H1 (cell line): ENCODE measurements at regions of chr9 and their contacts with region 1.

Region 1: GRCh38 chr9:128081056-128081455 is 13.0 kb downstream of the SLC25A25 start:
- DNase-seq: no peak
- H3K4me3 ChIP-seq: no peak overlapping the region
- H3K27ac ChIP-seq: no peak overlapping the region
- H3K4me1 ChIP-seq: peaks cover 0 to 5% (median 1%) of the 10 kb centered on the region in 4 experiments; a peak in 3 of 7 replicates
- H3K27me3 ChIP-seq: no peaks in the 10 kb centered on the region
- CTCF ChIP-seq: no peak
- EP300 ChIP-seq: no peak
- POLR2A ChIP-seq: no peak
- RAD21 ChIP-seq: no peak

Region 2: DNA sequence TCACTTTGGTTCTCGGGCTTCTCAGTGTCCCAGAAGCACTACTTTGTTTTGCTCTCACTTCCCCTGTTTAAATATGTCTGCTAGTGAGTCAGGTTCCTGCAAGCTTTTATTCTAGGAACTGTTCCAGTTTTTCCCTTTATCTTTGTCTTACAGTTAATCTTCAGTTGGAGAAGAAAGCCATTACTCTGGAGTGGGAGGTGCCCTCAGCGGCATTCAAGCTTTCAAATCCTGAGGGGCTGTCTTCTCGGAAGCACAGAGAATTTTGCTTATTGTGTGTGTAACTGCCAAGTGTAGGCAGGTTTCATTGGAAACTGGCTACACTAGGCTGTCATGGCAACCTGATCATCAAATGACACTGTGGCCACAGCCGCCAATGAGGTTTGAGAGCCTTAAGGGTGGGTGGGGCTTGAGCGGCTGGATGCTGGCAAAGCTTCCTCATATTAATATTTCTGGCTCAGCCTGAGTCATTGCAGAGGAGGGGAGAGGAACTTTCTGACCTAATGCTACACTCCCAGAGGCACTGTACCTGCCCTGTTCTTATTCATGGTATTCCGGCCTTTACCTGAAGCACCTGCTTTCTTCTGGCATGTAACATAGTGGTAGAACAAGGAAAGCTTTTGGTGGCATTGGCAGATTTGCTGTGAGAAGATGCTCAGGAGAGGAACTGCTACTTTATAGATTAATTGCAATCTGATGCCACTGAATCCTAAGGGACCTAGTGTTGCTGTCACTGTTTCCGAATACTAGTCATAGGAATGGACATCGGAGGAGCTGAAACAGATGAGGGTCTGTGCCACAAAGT is 13.3 kb after region 1 on chr9:
- CTCF ChIA-PET with region 1: interaction called, 13 read pairs
- POLR2A ChIA-PET with region 1: interaction called, 8 read pairs
- DNase-seq: no peak
- H3K4me3 ChIP-seq: no peak overlapping the region
- H3K27ac ChIP-seq: peak overlapping the region; percentile 46; the same call in 1 of the 2 replicates
- H3K4me1 ChIP-seq: peaks cover 0 to 16% (median 14%) of the 10 kb centered on the region in 4 experiments; a peak in 6 of 7 replicates
- H3K27me3 ChIP-seq: no peaks in the 10 kb centered on the region
- CTCF ChIP-seq: no peak
- EP300 ChIP-seq: no peak
- POLR2A ChIP-seq: no peak
- RAD21 ChIP-seq: no peak

Region 3: GRCh38 chr9:128103589-128103962 is 22.5 kb after region 1 on chr9:
- CTCF ChIA-PET with region 1: interaction called, 10 read pairs
- POLR2A ChIA-PET with region 1: interaction called, 8 read pairs
- DNase-seq: peak in 1 of 2 experiments; percentile 58
- H3K4me3 ChIP-seq: no peak overlapping the region
- H3K27ac ChIP-seq: no peak overlapping the region
- H3K4me1 ChIP-seq: peaks cover 11 to 21% (median 15%) of the 10 kb centered on the region in 4 experiments
- H3K27me3 ChIP-seq: no peaks in the 10 kb centered on the region
- CTCF ChIP-seq: peak in 2 of 3 experiments; percentile 37 to 43; a peak in 3 of 4 replicates
- EP300 ChIP-seq: no peak
- POLR2A ChIP-seq: no peak; a peak in 1 of 3 replicates
- RAD21 ChIP-seq: peak; percentile 26 to 51; a peak in 3 of 4 replicates